ENCODE measurements at regions of chr1 and their contacts with region 1.

Region 1: GRCh38 chr1:26733982-26734381 is 38.2 kb downstream of the ARID1A start:
- H3K4me3 Mint-ChIP-seq: no peak overlapping the region
- H3K27ac Mint-ChIP-seq: no peak overlapping the region
- H3K4me1 Mint-ChIP-seq: peaks cover 29% of the 10 kb centered on the region
- H3K27me3 Mint-ChIP-seq: no peaks in the 10 kb centered on the region

Region 2: DNA sequence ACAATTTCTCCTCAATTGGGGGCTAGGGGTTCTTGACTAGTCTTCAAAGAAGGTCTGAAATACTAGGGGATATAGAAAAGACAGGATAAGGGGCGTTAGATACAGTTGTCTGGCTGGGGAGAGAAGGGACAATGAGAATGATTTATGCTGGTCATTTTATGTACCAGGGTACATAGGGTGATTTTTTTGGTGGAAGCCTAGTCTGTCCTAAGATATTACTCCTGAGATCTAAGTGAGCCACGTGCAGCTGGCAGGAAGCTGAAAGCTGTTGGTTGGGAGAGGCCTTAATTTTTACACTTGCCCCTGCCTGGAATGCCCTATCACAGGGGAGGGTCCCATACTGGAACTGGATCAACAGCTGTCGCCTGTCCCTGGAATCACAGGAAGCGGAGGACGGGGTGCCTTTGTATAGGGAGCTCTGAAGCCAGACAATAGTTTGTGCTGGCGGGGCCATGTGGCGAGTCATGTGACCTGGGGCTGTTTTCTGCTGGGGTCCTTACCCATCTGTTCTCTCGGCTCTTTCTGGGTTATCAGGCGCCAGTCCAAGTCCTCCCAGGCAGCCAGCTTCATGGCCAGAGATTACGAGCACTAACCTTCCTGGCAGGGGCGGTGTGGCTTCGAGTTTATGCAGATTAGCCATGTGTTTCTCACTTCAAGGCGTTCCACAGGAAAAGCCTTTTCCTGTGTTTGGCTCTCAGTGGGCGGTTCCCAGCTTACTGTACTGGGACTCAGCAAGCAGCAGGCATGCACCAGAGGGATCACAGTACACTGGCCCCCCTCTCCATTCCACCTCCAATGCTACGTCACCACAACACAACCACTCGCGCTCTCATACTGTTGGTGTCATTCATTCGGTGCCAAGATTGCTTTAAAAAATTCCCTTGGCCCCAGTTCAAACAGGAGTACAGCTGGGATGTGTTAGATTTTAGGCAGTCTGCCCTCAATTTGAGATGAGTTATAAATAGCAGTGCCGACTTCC is 10.7 kb before region 1 on chr1:
- intact Hi-C with region 1: loop called (anchors 1 kb)
- H3K4me3 Mint-ChIP-seq: peak overlapping the region; percentile 47
- H3K27ac Mint-ChIP-seq: peak overlapping the region; percentile 70
- H3K4me1 Mint-ChIP-seq: peaks cover 78% of the 10 kb centered on the region
- H3K27me3 Mint-ChIP-seq: no peaks in the 10 kb centered on the region